Prostate gland (tissue), 2 donors: ENCODE measurements at regions of chr11 and their contacts with region 1.

Region 1: GRCh38 chr11:18105802-18106574 is at the start of gene SAAL1:
- DNase-seq: peak; percentile 76
- H3K4me3 ChIP-seq: peak within 1 kb of the TSS; percentile 89 to 98
- H3K27ac ChIP-seq: peak within 1 kb of the TSS; percentile 54 to 63
- H3K4me1 ChIP-seq: no peaks in the 10 kb centered on the region
- H3K27me3 ChIP-seq: no peaks in the 10 kb centered on the region
- CTCF ChIP-seq: peak; percentile 47 to 80 (median 76)
- POLR2A ChIP-seq: no peak
- total RNA-seq, gene SAAL1: 11.2 to 25.8 TPM

Region 2: GRCh38 chr11:17991783-17992433 is 114.1 kb before region 1 on chr11:
- intact Hi-C with region 1: loop called (anchors 5 kb)
- DNase-seq: no peak
- H3K4me3 ChIP-seq: no peak overlapping the region
- H3K27ac ChIP-seq: no peak overlapping the region
- H3K4me1 ChIP-seq: no peaks in the 10 kb centered on the region
- H3K27me3 ChIP-seq: no peaks in the 10 kb centered on the region
- CTCF ChIP-seq: peak; percentile 56 to 75 (median 64)
- POLR2A ChIP-seq: no peak

Region 3: DNA sequence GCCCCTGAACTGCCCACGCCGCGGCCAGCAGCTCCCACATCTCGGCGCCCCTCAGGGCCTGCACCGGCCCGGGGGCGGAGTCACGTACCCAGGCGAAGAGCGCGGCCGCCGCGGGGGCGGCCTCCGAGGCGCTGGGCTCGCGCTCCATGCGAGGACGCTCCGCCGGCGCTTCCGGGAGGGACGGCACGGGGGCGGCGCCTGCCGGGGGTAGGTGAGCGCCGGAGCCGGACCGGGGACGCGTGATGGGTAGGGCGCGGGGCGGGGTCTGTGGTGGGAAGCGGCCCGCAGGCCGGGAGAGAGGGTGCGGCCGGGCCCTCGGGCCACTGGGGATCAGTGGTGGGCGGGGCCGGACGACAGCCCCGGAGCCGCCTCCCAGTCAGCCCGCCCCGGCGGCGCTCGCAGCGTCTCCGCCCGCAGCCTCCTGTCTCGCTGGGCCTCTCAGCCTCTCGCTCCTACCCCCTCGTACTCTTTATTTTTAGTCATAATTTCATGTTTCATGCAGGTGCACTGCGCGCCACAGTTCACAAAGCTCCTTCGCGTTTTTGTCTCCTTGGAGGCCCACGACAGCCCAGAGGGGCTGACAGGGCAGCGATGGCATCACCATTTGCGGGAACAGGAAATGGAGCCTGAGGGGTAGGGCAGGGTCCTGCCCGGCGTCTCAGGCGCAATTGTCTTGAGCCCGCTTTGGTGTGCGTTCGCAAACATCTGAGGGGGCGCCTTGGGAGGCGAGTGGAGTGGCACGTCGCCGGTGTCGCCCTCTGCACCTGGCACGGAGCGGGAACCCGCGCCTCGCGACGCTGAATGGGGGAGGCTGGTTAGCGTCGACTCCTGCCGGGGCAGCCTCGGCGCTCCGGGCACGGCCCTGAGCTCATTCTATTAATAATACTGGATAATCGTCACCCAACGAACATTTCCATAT is 92.9 kb before region 1 on chr11 and contains the start of gene SERGEF:
- intact Hi-C with region 1: loop called (anchors 5 kb)
- DNase-seq: peak; percentile 94
- H3K4me3 ChIP-seq: peak within 1 kb of the TSS; percentile 70 to 83
- H3K27ac ChIP-seq: peak within 1 kb of the TSS; percentile 72 to 82
- H3K4me1 ChIP-seq: no peaks in the 10 kb centered on the region
- H3K27me3 ChIP-seq: no peaks in the 10 kb centered on the region
- CTCF ChIP-seq: peak in 2 of 4 experiments; percentile 8 to 47
- POLR2A ChIP-seq: peak; percentile 57
- total RNA-seq, gene SERGEF: 29.9 to 39.4 TPM